B cell (primary cell): ENCODE measurements at regions of chr9 and their contacts with region 1.

Region 1: DNA sequence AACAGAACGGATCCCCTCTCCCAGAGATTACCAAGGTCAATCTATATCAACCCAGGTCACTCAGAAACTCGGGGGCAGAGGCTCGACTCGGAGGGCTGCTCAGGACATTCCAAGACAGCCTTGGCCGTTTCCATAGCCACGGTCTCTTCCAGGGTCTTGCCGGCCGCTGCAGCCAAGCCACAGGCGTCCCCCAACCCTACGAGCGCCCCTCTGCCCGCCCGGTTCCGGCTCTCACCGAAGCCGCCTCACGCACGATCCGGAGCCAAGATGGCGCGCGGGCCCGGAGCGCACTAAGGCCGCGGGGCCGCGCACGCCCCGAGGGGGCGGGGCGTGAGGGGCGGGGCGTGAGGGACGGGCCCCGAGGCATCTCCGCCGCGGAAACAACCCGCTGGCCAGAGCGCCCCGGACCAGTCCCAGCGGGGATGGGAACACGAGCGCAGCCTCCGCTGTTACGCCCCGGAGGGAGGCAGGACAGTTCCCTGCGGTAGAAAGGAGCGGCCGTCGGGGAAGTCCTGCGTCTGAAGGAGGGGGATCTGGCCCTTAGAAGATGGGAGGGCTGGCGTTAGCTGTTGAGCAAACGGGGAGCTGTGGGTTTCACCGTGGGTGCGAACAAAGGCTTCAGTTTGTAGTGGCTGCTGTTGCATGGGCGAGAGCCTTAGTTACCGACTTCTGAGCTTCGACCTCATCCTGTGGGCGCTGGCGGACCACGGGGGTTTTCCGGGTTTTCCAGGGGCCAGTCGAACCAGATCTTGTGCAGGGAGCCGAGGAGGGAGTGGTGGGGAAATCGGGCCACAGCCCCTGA is at the start of gene RPP25L:
- DNase-seq: peak; percentile 91
- ATAC-seq: peak; percentile 95
- H3K4me3 ChIP-seq: peak within 1 kb of the TSS; percentile 69 to 97 (median 80)
- H3K4me3 Mint-ChIP-seq: peak within 1 kb of the TSS; percentile 91
- H3K27ac ChIP-seq: peak within 1 kb of the TSS; percentile 78 to 87
- H3K27ac Mint-ChIP-seq: peak within 1 kb of the TSS; percentile 90
- H3K4me1 ChIP-seq: peaks cover 7 to 21% of the 10 kb centered on the region in 2 donors
- H3K4me1 Mint-ChIP-seq: peaks cover 22% of the 10 kb centered on the region
- H3K27me3 ChIP-seq: no peaks in the 10 kb centered on the region
- H3K27me3 Mint-ChIP-seq: no peaks in the 10 kb centered on the region
- CTCF ChIP-seq: no peak
- total RNA-seq, gene RPP25L: 20.2 and 21.7 TPM in 2 replicates

Region 2: GRCh38 chr9:34522971-34523797 is 88.8 kb before region 1 on chr9 and contains the start of gene ENHO:
- CTCF ChIA-PET with region 1: no interaction called
- POLR2A ChIA-PET with region 1: interaction called, 5 read pairs
- intact Hi-C with region 1: loop called (anchors 1 kb)
- DNase-seq: peak; percentile 95
- ATAC-seq: peak; percentile 98
- H3K4me3 ChIP-seq: peak within 1 kb of the TSS in 4 of 5 experiments; percentile 37 to 69 (median 50)
- H3K4me3 Mint-ChIP-seq: peak within 1 kb of the TSS; percentile 89
- H3K27ac ChIP-seq: no peak within 1 kb of the TSS
- H3K27ac Mint-ChIP-seq: peak within 1 kb of the TSS; percentile 76
- H3K4me1 ChIP-seq: peaks cover 9 to 12% of the 10 kb centered on the region in 2 donors
- H3K4me1 Mint-ChIP-seq: peaks cover 13% of the 10 kb centered on the region
- H3K27me3 ChIP-seq: peaks cover 0 to 18% (median 4%) of the 10 kb centered on the region in 4 experiments
- H3K27me3 Mint-ChIP-seq: peaks cover 28% of the 10 kb centered on the region
- CTCF ChIP-seq: no peak
- total RNA-seq, gene ENHO: not detected in 2 replicates

Region 3: GRCh38 chr9:34628656-34629491 is 16.8 kb after region 1 on chr9 and contains the start of gene ARID3C:
- CTCF ChIA-PET with region 1: interaction called, 150 read pairs
- POLR2A ChIA-PET with region 1: interaction called, 8 read pairs
- intact Hi-C with region 1: loop called (anchors 1 kb)
- DNase-seq: peak; percentile 62
- ATAC-seq: peak; percentile 81
- H3K4me3 ChIP-seq: peak within 1 kb of the TSS in 4 of 5 experiments; percentile 18 to 57 (median 44)
- H3K4me3 Mint-ChIP-seq: peak within 1 kb of the TSS; percentile 91
- H3K27ac ChIP-seq: no peak within 1 kb of the TSS
- H3K27ac Mint-ChIP-seq: peak within 1 kb of the TSS; percentile 1
- H3K4me1 ChIP-seq: peaks cover 26 to 33% of the 10 kb centered on the region in 2 donors
- H3K4me1 Mint-ChIP-seq: peaks cover 18% of the 10 kb centered on the region
- H3K27me3 ChIP-seq: peaks cover 0 to 67% (median 51%) of the 10 kb centered on the region in 4 experiments
- H3K27me3 Mint-ChIP-seq: peaks cover 55% of the 10 kb centered on the region
- CTCF ChIP-seq: no peak
- total RNA-seq, gene ARID3C: not detected in 2 replicates

Region 4: GRCh38 chr9:34665381-34666250 is 53.6 kb after region 1 on chr9:
- CTCF ChIA-PET with region 1: interaction called, 3 read pairs
- POLR2A ChIA-PET with region 1: no interaction called
- intact Hi-C with region 1: loop called (anchors 1 kb)
- DNase-seq: peak; percentile 93
- ATAC-seq: peak; percentile 90
- H3K4me3 ChIP-seq: peak overlapping the region; percentile 65 to 87 (median 83)
- H3K4me3 Mint-ChIP-seq: peak overlapping the region; percentile 94
- H3K27ac ChIP-seq: peak overlapping the region; percentile 86 to 93
- H3K27ac Mint-ChIP-seq: peak overlapping the region; percentile 94
- H3K4me1 ChIP-seq: peaks cover 10 to 18% of the 10 kb centered on the region in 2 donors
- H3K4me1 Mint-ChIP-seq: peaks cover 20% of the 10 kb centered on the region
- H3K27me3 ChIP-seq: no peaks in the 10 kb centered on the region
- H3K27me3 Mint-ChIP-seq: no peaks in the 10 kb centered on the region
- CTCF ChIP-seq: no peak